GM10248 (cell line): ENCODE measurements at regions of chr2 and their contacts with region 1.

Region 1: GRCh38 chr2:74919827-74920226 is 38.6 kb upstream of the POLE4 start:
- DNase-seq: peak; percentile 84
- CTCF ChIP-seq: peak; percentile 91

Region 2: GRCh38 chr2:74806920-74807319 is 112.9 kb before region 1 on chr2:
- CTCF ChIA-PET with region 1: no interaction called
- POLR2A ChIA-PET with region 1: no interaction called
- DNase-seq: no peak
- CTCF ChIP-seq: no peak

Region 3: GRCh38 chr2:74935975-74936391 is 16.2 kb after region 1 on chr2:
- CTCF ChIA-PET with region 1: interaction called, 16 read pairs
- POLR2A ChIA-PET with region 1: no interaction called
- DNase-seq: no peak
- CTCF ChIP-seq: no peak

Region 4: GRCh38 chr2:74952575-74952974 is 32.7 kb after region 1 on chr2:
- CTCF ChIA-PET with region 1: interaction called, 10 read pairs
- POLR2A ChIA-PET with region 1: no interaction called
- DNase-seq: no peak
- CTCF ChIP-seq: no peak